GM10248 (cell line): ENCODE measurements at regions of chr9 and their contacts with region 1.

Region 1: DNA sequence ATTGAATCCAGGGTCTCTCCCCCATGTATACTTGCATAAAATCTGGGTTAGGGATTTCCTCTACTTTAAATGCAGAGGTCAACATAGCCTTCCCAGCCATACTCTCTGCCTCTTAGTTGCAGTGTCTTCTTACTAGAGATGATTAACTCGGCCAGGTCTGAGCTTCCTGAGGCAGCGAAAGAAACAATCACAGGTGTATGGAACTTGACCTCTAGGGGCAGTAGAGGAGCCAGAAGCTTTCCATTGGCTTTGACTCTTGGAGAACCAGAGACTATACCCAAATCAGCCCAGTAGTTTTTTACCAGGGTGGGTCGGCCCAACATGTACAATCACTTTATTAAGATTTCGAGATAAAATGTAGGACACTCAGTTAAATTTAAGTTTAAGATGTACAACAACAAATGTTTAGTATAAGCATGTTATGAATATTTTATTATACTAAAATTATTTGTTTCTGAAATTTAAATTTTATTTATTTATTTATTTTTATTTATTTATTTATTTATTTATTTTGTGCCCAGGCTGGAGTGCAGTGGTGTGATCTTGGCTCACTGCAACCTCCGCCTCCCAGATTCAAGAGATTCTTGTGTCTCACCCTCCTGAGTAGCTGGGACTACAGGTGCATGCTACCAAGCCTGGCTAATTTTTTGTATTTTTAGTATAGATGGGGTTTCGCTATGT is 48.0 kb upstream of the DMRT3 start:
- DNase-seq: peak; percentile 22
- CTCF ChIP-seq: peak; percentile 18

Region 2: GRCh38 chr9:917730-918129 is 10.8 kb before region 1 on chr9:
- CTCF ChIA-PET with region 1: interaction called, 10 read pairs
- POLR2A ChIA-PET with region 1: no interaction called
- DNase-seq: no peak
- CTCF ChIP-seq: no peak

Region 3: DNA sequence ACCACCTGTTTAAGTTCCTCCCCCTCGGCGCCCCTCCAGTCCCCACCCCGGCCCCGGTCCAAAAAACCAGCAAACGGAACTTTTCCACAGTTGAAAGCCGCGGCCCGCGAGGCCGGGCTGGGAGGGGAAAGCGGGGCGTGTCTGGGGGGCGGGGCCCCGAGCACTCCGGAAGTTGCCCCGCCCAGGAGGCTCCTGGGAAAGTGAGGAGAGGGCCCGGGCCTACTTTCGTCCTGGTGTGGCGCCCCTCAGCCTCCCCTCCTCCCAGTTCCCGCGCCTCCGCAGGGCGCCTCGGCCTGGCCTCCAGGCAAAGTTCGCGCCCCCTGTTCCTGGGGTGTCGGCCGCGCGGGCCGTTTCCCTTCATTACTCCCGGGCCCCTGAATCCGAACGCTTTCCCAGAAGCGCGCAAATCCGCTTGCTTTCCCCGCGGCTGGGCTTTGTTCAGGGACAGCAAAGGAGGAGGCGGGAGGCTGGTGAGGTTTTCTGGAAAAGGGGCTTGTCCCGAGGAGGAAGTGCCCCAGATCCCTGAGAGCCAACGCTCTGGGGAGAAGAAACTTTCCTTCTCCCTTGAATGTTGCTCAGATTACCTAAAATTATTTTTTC is 43.5 kb after region 1 on chr9:
- CTCF ChIA-PET with region 1: no interaction called
- POLR2A ChIA-PET with region 1: no interaction called
- DNase-seq: no peak
- CTCF ChIP-seq: no peak